ENCODE measurements at regions of chr19 and their contacts with region 1.

Region 1: GRCh38 chr19:1507763-1508509 is 4.9 kb downstream of the ADAMTSL5 start:
- DNase-seq: peak; percentile 97
- H3K4me3 ChIP-seq: peak overlapping the region; percentile 20 to 47 (median 40)
- H3K27ac ChIP-seq: peak overlapping the region; percentile 70 to 89 (median 82)
- H3K4me1 ChIP-seq: peaks cover 0 to 35% (median 27%) of the 10 kb centered on the region in 4 donors
- H3K27me3 ChIP-seq: peaks cover 8 to 36% (median 33%) of the 10 kb centered on the region in 3 donors
- CTCF ChIP-seq: no peak
- EP300 ChIP-seq: peak in 1 of 4 donors; percentile 76
- POLR2A ChIP-seq: no peak

Region 2: GRCh38 chr19:1154731-1155351 is 353.1 kb before region 1 on chr19:
- intact Hi-C with region 1: no loop called
- DNase-seq: peak; percentile 96
- H3K4me3 ChIP-seq: peak overlapping the region in 2 of 4 donors; percentile 13 to 23
- H3K27ac ChIP-seq: peak overlapping the region; percentile 62 to 86 (median 72)
- H3K4me1 ChIP-seq: peaks cover 0 to 30% (median 26%) of the 10 kb centered on the region in 4 donors
- H3K27me3 ChIP-seq: no peaks in the 10 kb centered on the region
- CTCF ChIP-seq: no peak
- EP300 ChIP-seq: peak in 3 of 4 donors; percentile 66 to 91 (median 69)
- POLR2A ChIP-seq: no peak

Region 3: DNA sequence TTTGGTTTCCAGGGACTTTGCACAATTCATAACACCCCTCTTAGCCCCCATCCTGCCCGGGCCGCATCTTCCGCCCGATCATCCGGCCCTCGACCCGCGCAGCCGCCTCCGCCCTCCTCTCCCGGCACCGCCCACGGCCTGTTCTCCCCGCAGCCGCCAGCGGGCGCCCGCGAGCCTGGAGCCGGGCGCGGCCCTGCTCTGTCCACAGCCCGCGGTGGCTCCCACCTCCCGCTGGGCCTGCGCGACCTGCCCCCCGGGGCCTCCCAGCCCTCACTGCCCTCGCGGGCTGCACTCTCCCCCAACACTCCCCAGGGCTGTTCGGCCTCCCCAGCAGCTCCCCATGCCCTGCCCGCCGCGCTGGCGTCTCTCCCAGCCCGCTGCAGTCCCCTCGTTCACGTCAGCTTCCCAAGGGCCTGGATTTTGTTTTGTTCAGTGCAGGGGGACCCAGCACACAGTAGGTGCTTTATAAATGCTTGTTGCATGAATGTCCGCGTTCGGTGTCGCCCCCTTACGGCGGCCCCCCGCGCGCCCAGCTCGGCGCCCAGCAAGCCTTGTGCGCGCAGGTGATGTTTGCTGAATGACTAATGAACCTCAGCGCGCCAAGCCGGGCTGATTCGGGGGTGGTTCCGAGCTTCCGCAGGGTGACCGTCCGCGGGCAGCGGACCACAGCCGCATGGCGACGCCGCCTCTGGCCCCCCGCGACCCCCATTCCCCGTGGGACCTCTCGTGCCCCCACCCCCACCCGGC is 62.6 kb before region 1 on chr19:
- intact Hi-C with region 1: loop called (anchors 5 kb)
- DNase-seq: no peak
- H3K4me3 ChIP-seq: peak overlapping the region in 3 of 4 donors; percentile 33 to 43 (median 43)
- H3K27ac ChIP-seq: peak overlapping the region in 2 of 4 donors; percentile 7 to 22
- H3K4me1 ChIP-seq: peaks cover 0 to 41% (median 33%) of the 10 kb centered on the region in 4 donors
- H3K27me3 ChIP-seq: peaks cover 44 to 54% (median 51%) of the 10 kb centered on the region in 3 donors
- CTCF ChIP-seq: peak; percentile 29 to 98 (median 65)
- EP300 ChIP-seq: no peak
- POLR2A ChIP-seq: no peak

Region 4: GRCh38 chr19:1455336-1456120 is 52.4 kb before region 1 on chr19:
- intact Hi-C with region 1: no loop called
- DNase-seq: no peak
- H3K4me3 ChIP-seq: no peak overlapping the region
- H3K27ac ChIP-seq: no peak overlapping the region
- H3K4me1 ChIP-seq: peaks cover 0 to 36% (median 30%) of the 10 kb centered on the region in 4 donors
- H3K27me3 ChIP-seq: peaks cover 64 to 80% (median 75%) of the 10 kb centered on the region in 3 donors
- CTCF ChIP-seq: no peak
- EP300 ChIP-seq: no peak
- POLR2A ChIP-seq: no peak

Region 5: DNA sequence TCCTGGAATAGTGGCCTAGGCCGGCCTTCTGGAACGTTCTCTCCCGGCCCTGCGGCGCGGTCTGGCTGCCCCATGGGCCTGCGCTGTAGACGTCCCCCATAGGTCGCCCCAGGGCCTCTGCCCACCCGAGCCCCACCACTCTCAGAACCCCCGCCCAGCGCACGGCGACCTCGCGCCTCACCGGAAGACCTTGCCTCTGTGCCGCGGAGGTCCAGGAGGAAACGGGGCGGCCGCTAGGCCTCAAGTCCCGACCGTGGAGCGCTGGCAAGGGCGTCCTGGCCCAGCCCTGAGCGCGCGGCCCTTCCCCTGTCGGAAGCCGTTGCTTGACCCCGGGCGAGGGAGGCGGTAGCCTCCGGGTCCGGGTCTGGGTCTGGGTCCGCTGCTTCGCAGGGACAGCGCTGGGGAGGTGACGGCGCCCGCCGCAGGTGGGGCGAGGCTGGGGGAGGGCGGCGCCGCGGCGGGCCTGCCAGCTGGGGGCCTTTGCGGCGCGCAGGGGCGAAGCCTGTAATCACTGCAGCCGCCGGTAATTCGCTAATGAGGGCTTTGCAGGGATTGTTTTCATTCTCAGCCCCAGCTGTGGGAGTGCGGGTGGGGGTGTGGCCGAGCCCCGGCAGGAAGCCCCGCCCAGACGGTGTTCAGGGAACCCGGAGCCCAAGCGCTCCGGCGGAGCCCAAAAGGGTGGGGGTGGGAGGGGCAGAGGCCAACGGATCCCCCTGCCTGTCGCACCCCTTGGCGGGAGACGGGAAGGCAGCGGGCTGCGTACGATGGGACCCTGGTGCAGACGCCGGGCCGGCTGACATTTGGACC is 37.5 kb before region 1 on chr19:
- intact Hi-C with region 1: no loop called
- DNase-seq: no peak
- H3K4me3 ChIP-seq: peak overlapping the region; percentile 4 to 42 (median 35)
- H3K27ac ChIP-seq: no peak overlapping the region
- H3K4me1 ChIP-seq: peaks cover 0 to 66% (median 63%) of the 10 kb centered on the region in 4 donors
- H3K27me3 ChIP-seq: peaks cover 67 to 97% (median 88%) of the 10 kb centered on the region in 3 donors
- CTCF ChIP-seq: no peak
- EP300 ChIP-seq: no peak
- POLR2A ChIP-seq: no peak

Region 6: GRCh38 chr19:1566513-1567115 is 58.7 kb after region 1 on chr19:
- intact Hi-C with region 1: no loop called
- DNase-seq: peak; percentile 88
- H3K4me3 ChIP-seq: peak overlapping the region; percentile 46 to 78 (median 72)
- H3K27ac ChIP-seq: peak overlapping the region; percentile 88 to 91 (median 91)
- H3K4me1 ChIP-seq: peaks cover 0 to 27% (median 15%) of the 10 kb centered on the region in 4 donors
- H3K27me3 ChIP-seq: no peaks in the 10 kb centered on the region
- CTCF ChIP-seq: no peak
- EP300 ChIP-seq: no peak
- POLR2A ChIP-seq: peak in 1 of 2 donors; percentile 65